ENCODE measurements at regions of chr17 and their contacts with region 1.

Region 1: DNA sequence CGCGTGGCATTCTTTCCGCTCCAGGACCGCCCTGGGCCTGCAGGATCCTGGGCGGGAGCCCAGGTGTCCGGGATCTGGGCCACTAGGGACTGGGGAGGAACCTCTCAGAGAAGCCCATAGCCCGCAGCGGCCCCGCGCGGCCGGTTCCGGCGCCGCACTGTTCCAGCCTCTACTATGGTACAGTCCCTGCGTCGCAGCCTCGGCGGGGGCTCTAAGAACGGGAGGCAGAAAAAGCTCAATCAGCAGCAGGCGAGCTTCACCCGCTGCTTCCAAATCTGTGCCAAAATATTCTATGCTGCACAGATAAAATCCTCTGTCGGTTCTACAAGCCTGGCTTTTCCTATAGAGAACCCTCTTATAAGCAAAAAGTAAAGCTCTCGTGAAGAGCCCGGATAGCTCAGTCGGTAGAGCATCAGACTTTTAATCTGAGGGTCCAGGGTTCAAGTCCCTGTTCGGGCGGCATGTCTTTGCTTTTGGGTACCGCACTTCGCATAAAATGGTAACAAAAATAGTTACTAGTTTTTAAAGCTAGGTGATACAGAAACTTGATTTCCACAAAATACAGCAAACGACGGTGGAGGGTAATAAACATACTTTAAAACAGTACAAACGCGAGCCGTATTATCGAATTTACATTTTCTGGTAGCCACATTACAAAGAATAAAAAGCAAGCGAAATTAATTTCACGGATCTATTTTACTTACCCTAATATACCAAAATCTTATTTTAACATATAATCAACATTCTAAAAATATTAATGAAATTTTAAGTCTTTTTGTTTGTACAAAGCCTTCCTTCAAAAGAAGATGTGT is 661 bp upstream of the ALOXE3 start:
- DNase-seq: peak; percentile 84 to 94 (median 91)
- ATAC-seq: peak; percentile 79 to 86 (median 84)
- H3K4me3 ChIP-seq: peak overlapping the region; percentile 1 to 79 (median 64)
- H3K27ac ChIP-seq: peak overlapping the region; percentile 20 to 85 (median 74)
- H3K4me1 ChIP-seq: peaks cover 7 to 61% (median 43%) of the 10 kb centered on the region in 12 donors
- H3K27me3 ChIP-seq: peaks cover 0 to 60% (median 18%) of the 10 kb centered on the region in 9 donors
- CTCF ChIP-seq: peak; percentile 71 to 100 (median 88)
- POLR2A ChIP-seq: no peak

Region 2: GRCh38 chr17:8053598-8053997 is 65.4 kb before region 1 on chr17:
- intact Hi-C with region 1: no loop called
- DNase-seq: no peak
- ATAC-seq: no peak
- H3K4me3 ChIP-seq: no peak overlapping the region
- H3K27ac ChIP-seq: no peak overlapping the region
- H3K4me1 ChIP-seq: peaks cover 0 to 26% (median 0%) of the 10 kb centered on the region in 12 donors
- H3K27me3 ChIP-seq: peaks cover 0 to 9% (median 6%) of the 10 kb centered on the region in 9 donors
- CTCF ChIP-seq: no peak
- POLR2A ChIP-seq: no peak

Region 3: DNA sequence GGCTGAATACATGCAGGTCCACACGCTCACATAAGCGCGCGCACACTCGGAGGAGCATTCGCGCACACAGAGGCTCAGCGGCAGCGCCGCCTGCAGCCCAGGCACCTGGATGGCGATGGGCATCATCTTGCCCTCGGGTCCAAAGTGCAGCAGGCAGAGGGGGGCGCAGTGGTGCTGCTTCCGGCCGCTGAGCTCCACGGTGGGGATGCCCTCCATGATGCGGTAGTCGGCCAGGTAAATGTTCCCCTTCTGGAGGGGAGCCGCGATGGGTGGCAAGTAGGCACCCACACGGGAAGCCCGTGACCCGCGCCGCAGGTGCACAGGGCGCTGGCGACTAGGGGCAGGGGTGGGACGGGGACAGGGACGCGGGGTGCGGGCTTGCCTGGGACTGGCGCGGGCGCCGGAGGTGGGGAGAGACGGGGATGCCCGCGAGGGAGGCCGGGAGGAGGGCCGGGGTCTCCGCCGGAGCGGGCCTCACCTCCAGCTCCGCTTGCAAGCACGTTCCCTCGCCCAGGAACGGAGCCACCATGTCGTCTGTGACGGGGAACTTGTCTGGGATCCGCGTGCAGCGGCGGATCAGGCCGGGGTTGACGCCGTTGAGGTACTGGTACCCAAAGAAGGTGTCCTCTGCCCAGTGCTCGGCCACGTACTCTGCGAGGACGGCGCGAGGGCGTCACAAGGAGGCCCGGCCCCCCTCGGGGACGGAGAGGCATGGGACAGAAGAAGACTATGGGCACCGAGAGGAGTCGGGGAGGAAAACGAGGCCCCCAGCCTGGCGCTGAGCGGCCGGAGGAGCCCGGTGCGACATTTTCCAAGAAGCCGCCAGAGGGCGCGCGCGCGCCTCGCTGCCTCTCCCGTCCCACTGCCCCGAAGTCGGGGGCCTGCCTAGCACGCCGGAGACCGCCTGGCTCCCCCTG is 39.4 kb before region 1 on chr17:
- intact Hi-C with region 1: loop called in 3 of 10 experiments (anchors 5 kb)
- DNase-seq: peak; percentile 60 to 86 (median 67)
- ATAC-seq: peak; percentile 72 to 93 (median 86)
- H3K4me3 ChIP-seq: peak overlapping the region; percentile 0 to 58 (median 43)
- H3K27ac ChIP-seq: no peak overlapping the region
- H3K4me1 ChIP-seq: peaks cover 0 to 17% (median 12%) of the 10 kb centered on the region in 12 donors
- H3K27me3 ChIP-seq: peaks cover 16 to 98% (median 63%) of the 10 kb centered on the region in 9 donors
- CTCF ChIP-seq: peak; percentile 87 to 99 (median 92)
- POLR2A ChIP-seq: no peak

Region 4: GRCh38 chr17:8156246-8156992 is 37.4 kb after region 1 on chr17:
- intact Hi-C with region 1: loop called in 9 of 10 experiments (anchors 1 to 5 kb)
- DNase-seq: peak; percentile 100
- ATAC-seq: peak; percentile 59 to 77 (median 61)
- H3K4me3 ChIP-seq: peak overlapping the region; percentile 69 to 97 (median 86)
- H3K27ac ChIP-seq: peak overlapping the region; percentile 98 to 100 (median 100)
- H3K4me1 ChIP-seq: peaks cover 20 to 79% (median 36%) of the 10 kb centered on the region in 12 donors
- H3K27me3 ChIP-seq: no peaks in the 10 kb centered on the region
- CTCF ChIP-seq: peak in 3 of 12 donors; percentile 16 to 36 (median 28)
- POLR2A ChIP-seq: peak; percentile 97 to 100

Region 5: DNA sequence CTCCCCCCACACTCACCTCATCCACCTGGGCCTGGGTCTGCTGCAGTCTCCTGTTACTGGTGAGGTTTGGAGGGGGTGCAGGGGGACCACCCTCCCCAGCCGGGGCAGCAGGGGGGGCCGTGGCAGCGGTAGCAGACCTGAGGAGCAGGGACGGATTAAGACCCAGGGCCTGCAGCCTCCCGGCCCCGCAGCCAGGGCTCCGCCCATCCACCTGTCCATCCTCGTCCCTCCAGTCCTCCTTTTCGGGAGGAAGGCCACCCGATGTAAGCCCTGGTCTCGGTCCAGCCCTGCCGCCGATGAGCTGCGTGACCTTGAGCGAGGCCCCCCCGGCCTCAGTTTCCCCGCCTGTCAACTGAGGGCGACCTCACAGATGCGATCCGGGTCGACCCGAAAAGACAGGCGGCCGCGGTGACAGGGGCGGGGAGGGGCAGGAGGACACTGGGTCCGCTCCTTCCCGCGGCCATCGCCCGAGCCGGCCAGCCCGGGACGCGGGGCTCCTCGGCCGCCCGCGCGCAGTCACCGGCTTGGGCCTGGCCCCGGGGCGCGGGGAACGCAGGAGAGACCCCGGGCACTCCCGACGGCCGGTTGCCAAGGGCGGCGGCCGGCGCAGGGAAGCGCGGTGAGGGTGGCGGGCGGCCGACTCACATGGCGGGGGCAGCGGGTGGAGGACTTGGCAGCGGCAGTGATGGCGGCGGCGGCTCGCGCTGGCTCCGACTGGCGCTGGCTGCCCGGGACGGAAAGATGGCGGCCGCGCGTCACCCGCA is 43.4 kb after region 1 on chr17 and contains the start of gene VAMP2:
- intact Hi-C with region 1: loop called in 9 of 10 experiments (anchors 1 to 5 kb)
- DNase-seq: peak; percentile 81 to 92 (median 89)
- ATAC-seq: peak in 3 of 4 donors; percentile 46 to 69 (median 66)
- H3K4me3 ChIP-seq: peak within 1 kb of the TSS; percentile 82 to 100 (median 99)
- H3K27ac ChIP-seq: peak within 1 kb of the TSS; percentile 95 to 100 (median 100)
- H3K4me1 ChIP-seq: peaks cover 22 to 62% (median 42%) of the 10 kb centered on the region in 12 donors
- H3K27me3 ChIP-seq: no peaks in the 10 kb centered on the region
- CTCF ChIP-seq: no peak
- POLR2A ChIP-seq: peak; percentile 60 to 79
- total RNA-seq, gene VAMP2: 21.5 to 67.2 (median 51.1) TPM

Region 6: DNA sequence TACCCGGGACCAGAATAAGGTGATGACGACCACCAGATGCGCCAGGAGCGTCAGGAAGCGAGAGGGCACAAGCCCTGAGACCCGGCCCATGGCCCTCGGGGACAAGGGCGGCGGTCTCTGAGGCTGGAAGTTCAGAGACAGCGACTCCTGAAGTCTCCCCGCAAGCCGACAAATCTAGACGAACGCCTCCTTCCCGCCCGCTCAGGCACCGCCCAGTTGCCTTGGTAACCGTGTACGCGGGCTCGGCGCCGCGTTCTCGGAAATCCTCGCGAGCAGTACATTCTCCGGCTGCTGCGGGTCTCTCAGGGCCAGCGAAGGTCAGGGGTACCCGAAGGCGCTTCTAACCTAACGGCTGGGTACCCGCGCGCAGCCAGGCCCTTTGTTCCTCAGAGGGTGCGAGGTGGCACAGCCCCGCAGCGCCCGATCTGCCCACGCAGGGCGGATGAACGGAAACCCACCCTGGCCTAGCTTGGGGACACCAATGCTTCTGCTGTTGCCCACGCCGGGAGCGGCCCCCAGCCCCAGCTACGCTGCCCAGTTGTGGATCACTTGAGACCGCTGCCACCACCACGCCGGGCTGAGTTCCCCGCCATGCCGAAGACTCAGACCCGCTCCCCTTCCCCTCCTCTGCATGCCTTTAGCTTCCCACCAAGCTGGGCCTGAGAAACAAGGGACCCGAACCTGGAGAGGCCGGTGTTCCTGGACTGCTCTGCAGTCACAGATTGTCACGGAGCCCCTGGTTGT is 57.4 kb after region 1 on chr17 and contains the start of gene TMEM107:
- intact Hi-C with region 1: loop called in 1 of 10 experiments (anchors 2 kb)
- DNase-seq: peak; percentile 90 to 95 (median 91)
- ATAC-seq: peak; percentile 63 to 83 (median 82)
- H3K4me3 ChIP-seq: peak within 1 kb of the TSS; percentile 24 to 81 (median 60)
- H3K27ac ChIP-seq: peak within 1 kb of the TSS; percentile 33 to 88 (median 78)
- H3K4me1 ChIP-seq: peaks cover 0 to 44% (median 21%) of the 10 kb centered on the region in 12 donors
- H3K27me3 ChIP-seq: no peaks in the 10 kb centered on the region
- CTCF ChIP-seq: peak in 3 of 12 donors; percentile 9 to 30 (median 13)
- POLR2A ChIP-seq: peak in 1 of 2 donors; percentile 63
- total RNA-seq, gene TMEM107: 5.3 to 16.4 (median 8.4) TPM

Region 7: GRCh38 chr17:8222630-8223356 is 103.8 kb after region 1 on chr17:
- intact Hi-C with region 1: loop called in 6 of 10 experiments (anchors 1 to 10 kb)
- DNase-seq: peak; percentile 94 to 97 (median 95)
- ATAC-seq: peak; percentile 70 to 81 (median 74)
- H3K4me3 ChIP-seq: peak overlapping the region; percentile 49 to 82 (median 69)
- H3K27ac ChIP-seq: peak overlapping the region; percentile 93 to 99 (median 98)
- H3K4me1 ChIP-seq: peaks cover 0 to 31% (median 14%) of the 10 kb centered on the region in 12 donors
- H3K27me3 ChIP-seq: no peaks in the 10 kb centered on the region
- CTCF ChIP-seq: no peak
- POLR2A ChIP-seq: peak in 1 of 2 donors; percentile 83

Region 8: DNA sequence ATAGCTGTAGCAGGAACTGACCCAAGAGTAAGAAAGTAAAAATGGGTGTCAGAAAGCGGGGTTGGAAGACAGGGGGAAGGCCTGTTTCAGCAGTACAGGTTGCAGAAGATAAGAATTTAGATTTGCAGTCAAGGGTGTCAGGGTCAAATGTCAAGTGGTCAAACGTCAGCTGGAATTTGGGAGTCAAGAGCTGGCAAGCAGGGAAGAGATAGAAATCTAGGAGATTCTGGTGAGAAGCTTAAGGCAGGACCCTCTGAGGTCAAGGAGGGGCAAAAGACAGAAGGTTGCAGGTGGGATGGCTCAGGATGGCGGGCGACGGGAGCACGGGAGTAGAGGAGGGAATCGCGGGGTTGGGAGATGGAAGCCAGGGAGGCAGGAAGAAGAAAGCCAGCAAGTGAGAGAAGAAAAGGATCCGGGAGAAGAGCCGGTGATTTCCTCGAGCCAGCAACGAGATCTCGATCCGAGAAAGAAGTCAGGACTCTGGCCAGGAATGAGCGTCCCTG is 175.9 kb after region 1 on chr17:
- intact Hi-C with region 1: loop called in 3 of 10 experiments (anchors 5 to 10 kb)
- DNase-seq: no peak
- ATAC-seq: peak; percentile 2 to 14 (median 9)
- H3K4me3 ChIP-seq: peak overlapping the region in 11 of 12 donors; percentile 54 to 85 (median 71)
- H3K27ac ChIP-seq: peak overlapping the region; percentile 79 to 99 (median 94)
- H3K4me1 ChIP-seq: peaks cover 0 to 22% (median 10%) of the 10 kb centered on the region in 12 donors
- H3K27me3 ChIP-seq: no peaks in the 10 kb centered on the region
- CTCF ChIP-seq: no peak
- POLR2A ChIP-seq: no peak

Region 9: DNA sequence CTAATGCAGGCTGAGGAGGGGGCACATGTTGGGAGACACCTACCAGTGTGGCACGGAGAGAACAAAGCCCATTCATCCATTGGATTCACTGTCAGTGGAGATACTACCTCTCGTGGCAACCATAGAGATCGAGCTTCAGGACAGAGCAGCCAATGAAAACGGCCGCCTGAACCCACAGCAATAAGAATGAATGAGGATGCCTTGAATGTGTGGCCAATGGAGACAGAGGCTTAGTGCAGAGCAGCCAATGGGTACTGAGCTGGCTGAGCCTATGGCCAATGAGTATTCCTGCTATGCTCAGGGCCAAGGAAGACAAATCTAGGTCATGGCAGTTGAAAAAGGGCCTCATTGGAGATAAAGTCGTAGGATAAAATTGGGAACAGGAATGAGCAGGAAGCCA is 202.0 kb after region 1 on chr17:
- intact Hi-C with region 1: no loop called
- DNase-seq: no peak
- ATAC-seq: no peak
- H3K4me3 ChIP-seq: no peak overlapping the region
- H3K27ac ChIP-seq: no peak overlapping the region
- H3K4me1 ChIP-seq: peaks cover 0 to 25% (median 10%) of the 10 kb centered on the region in 12 donors
- H3K27me3 ChIP-seq: peaks cover 0 to 11% (median 3%) of the 10 kb centered on the region in 9 donors
- CTCF ChIP-seq: no peak
- POLR2A ChIP-seq: no peak

Measured in heart left ventricle (tissue), 16 donors.